ENCODE measurements at regions of chr11 and their contacts with region 1.

Region 1: DNA sequence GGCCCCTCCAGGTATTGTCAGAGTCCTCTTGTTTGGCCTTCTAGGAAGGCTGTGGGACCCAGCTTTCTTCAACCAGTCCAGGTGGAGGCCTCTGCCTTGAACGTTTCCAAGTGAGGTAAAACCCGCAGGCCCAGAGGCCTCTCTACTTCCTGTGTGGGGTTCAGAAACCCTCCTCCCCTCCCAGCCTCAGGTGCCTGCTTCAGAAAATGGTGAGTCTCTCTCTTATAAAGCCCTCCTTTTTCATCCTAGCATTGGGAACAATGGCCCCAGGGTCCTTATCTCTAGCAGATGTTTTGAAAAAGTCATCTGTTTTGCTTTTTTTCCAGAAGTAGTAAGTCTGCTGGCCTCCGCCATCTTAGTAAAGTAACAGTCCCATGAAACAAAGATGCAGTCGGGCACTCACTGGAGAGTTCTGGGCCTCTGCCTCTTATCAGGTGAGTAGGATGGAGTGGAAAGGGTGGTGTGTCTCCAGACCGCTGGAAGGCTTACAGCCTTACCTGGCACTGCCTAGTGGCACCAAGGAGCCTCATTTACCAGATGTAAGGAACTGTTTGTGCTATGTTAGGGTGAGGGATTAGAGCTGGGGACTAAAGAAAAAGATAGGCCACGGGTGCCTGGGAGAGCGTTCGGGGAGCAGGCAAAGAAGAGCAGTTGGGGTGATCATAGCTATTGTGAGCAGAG is at the start of gene CD3E:
- DNase-seq: peak; percentile 85
- ATAC-seq: peak; percentile 73
- H3K4me3 Mint-ChIP-seq: peak within 1 kb of the TSS; percentile 99
- H3K27ac Mint-ChIP-seq: peak within 1 kb of the TSS; percentile 99
- H3K4me1 Mint-ChIP-seq: peaks cover 73% of the 10 kb centered on the region
- H3K27me3 Mint-ChIP-seq: no peaks in the 10 kb centered on the region
- total RNA-seq, gene CD3E: 400 to 530 TPM

Region 2: GRCh38 chr11:117970400-117971024 is 334.2 kb before region 1 on chr11:
- CTCF ChIA-PET with region 1: no interaction called
- POLR2A ChIA-PET with region 1: no interaction called
- intact Hi-C with region 1: no loop called
- DNase-seq: peak; percentile 56
- ATAC-seq: peak; percentile 69
- H3K4me3 Mint-ChIP-seq: peak overlapping the region; percentile 4
- H3K27ac Mint-ChIP-seq: peak overlapping the region; percentile 74
- H3K4me1 Mint-ChIP-seq: peaks cover 65% of the 10 kb centered on the region
- H3K27me3 Mint-ChIP-seq: no peaks in the 10 kb centered on the region

Region 3: GRCh38 chr11:118002541-118003423 is 301.9 kb before region 1 on chr11:
- CTCF ChIA-PET with region 1: interaction called, 3 read pairs
- POLR2A ChIA-PET with region 1: no interaction called
- intact Hi-C with region 1: loop called in 1 of 2 experiments (anchors 10 kb)
- DNase-seq: peak; percentile 85
- ATAC-seq: peak; percentile 67
- H3K4me3 Mint-ChIP-seq: peak overlapping the region; percentile 38
- H3K27ac Mint-ChIP-seq: peak overlapping the region; percentile 97
- H3K4me1 Mint-ChIP-seq: peaks cover 94% of the 10 kb centered on the region
- H3K27me3 Mint-ChIP-seq: no peaks in the 10 kb centered on the region

Region 4: DNA sequence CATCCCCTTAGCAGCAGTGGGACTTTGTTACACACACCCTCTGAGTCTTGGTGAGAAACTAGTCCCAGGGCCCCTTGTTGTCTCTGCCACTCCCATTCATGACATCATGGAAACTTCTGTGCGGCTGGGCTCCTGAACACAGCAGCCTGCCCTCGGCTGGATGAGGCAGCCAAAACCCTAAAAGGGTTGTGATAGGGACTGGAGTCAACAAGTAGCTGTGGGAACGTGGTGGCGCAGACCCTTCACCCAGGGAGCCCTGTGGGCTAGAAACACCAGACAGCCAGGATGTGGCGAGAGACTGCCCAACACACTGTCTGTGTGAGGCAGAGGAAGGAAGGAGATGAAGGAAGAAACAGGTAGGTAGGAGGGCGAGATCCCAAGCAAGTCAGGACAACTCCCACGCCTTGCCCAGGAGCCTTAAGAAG is 33.9 kb after region 1 on chr11:
- CTCF ChIA-PET with region 1: interaction called, 15 read pairs
- POLR2A ChIA-PET with region 1: interaction called, 23 read pairs
- intact Hi-C with region 1: loop called (anchors 1 kb)
- DNase-seq: peak; percentile 94
- ATAC-seq: peak; percentile 63
- H3K4me3 Mint-ChIP-seq: peak overlapping the region; percentile 83
- H3K27ac Mint-ChIP-seq: peak overlapping the region; percentile 100
- H3K4me1 Mint-ChIP-seq: peaks cover 45% of the 10 kb centered on the region
- H3K27me3 Mint-ChIP-seq: no peaks in the 10 kb centered on the region

Region 5: DNA sequence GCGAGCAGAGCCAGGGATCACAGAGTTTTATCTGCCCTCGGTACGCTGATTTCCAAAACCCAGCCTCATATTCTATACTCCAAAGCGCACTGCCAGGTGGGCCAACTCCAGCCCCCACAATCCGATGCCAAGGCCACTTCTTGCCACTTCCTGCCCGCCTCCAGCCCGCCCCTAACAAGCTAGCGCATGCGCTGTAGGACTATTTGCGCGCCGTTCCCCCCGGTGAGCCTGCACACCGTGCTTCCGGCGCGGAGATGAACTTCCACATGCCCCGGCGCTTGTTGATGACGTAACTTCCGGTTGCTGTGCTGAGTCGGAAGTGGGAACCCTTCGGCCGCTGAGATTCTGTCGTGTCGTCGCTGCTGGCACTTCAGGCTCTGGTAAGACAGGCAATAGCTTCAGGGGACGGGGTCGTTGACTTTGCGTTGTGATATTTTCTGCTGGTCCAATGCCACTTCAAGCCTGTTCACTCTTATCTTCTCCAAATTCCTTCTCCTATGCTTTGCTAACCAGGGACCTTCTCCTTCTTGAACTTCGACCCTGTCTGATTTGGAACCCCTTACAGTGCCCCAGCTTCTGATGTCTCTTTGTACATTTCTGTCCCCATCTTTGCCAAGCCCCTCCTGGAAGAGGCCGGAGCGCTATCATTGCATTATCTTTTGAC is 54.7 kb after region 1 on chr11 and contains the start of gene UBE4A:
- CTCF ChIA-PET with region 1: interaction called, 7 read pairs
- POLR2A ChIA-PET with region 1: no interaction called
- intact Hi-C with region 1: loop called in 1 of 2 experiments (anchors 1 kb)
- DNase-seq: peak; percentile 99
- ATAC-seq: peak; percentile 96
- H3K4me3 Mint-ChIP-seq: peak within 1 kb of the TSS; percentile 100
- H3K27ac Mint-ChIP-seq: peak within 1 kb of the TSS; percentile 97
- H3K4me1 Mint-ChIP-seq: peaks cover 43% of the 10 kb centered on the region
- H3K27me3 Mint-ChIP-seq: no peaks in the 10 kb centered on the region
- total RNA-seq, gene UBE4A: 44.2 to 50.7 TPM

Region 6: GRCh38 chr11:118448294-118448693 is 143.6 kb after region 1 on chr11:
- CTCF ChIA-PET with region 1: no interaction called
- POLR2A ChIA-PET with region 1: no interaction called
- intact Hi-C with region 1: loop called in 1 of 2 experiments (anchors 5 kb)
- DNase-seq: peak; percentile 10
- ATAC-seq: peak; percentile 64
- H3K4me3 Mint-ChIP-seq: no peak overlapping the region
- H3K27ac Mint-ChIP-seq: no peak overlapping the region
- H3K4me1 Mint-ChIP-seq: peaks cover 73% of the 10 kb centered on the region
- H3K27me3 Mint-ChIP-seq: no peaks in the 10 kb centered on the region

Region 7: DNA sequence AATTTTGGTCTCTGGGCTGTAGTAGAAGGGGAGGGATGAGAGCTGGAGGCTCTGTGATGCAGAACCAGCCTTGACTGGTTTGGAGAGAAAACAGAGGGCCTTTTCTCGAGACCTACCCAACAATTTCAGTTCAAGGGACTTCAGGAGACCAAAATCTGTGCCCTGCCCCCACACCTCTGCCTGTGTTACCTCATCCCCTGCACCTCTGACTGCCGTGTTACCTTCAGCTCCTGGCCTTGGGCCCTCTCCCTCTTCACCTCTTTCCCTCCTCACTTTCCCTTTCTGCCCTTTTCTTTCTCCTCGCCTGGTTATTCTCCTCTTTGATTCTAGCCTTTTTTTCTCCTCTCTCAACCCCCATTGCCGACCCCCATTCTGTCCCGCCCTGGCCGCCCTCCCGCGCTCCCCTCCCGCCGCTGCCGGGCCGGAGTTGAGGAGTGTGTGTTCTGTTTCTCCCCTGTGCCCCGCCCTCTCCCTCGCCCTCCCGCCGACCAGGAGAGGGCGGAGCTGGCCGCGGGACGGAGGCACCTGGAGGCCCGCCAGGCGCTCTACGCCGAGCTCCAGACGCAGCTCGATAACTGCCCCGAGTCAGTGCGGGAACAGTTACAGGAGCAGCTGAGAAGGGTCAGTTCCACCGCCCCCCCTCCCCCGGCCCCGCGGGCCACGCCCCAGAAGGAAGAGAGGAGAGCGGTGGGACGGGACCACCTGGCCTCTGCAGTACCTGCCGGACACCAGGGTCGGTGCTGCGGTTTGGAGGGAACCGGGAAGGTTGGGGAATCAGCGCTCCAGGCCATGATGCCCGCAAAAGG is 329.9 kb after region 1 on chr11:
- CTCF ChIA-PET with region 1: no interaction called
- POLR2A ChIA-PET with region 1: no interaction called
- intact Hi-C with region 1: no loop called
- DNase-seq: peak; percentile 41
- ATAC-seq: peak; percentile 51
- H3K4me3 Mint-ChIP-seq: no peak overlapping the region
- H3K27ac Mint-ChIP-seq: no peak overlapping the region
- H3K4me1 Mint-ChIP-seq: no peaks in the 10 kb centered on the region
- H3K27me3 Mint-ChIP-seq: no peaks in the 10 kb centered on the region

Measured in activated CD4-positive, alpha-beta T cell treated with anti-CD3 and anti-CD28 coated beads for 36 hours (primary cell).